ENCODE measurements at regions of chr4 and their contacts with region 1.

Region 1: GRCh38 chr4:23202712-23203247 is 510.0 kb downstream of the GBA3 start:
- DNase-seq: no peak
- H3K4me3 ChIP-seq: no peak overlapping the region
- H3K27ac ChIP-seq: no peak overlapping the region
- H3K4me1 ChIP-seq: no peaks in the 10 kb centered on the region
- H3K27me3 ChIP-seq: no peaks in the 10 kb centered on the region
- CTCF ChIP-seq: no peak

Region 2: GRCh38 chr4:21271439-21272052 is 1931.2 kb before region 1 on chr4:
- CTCF ChIA-PET with region 1: no interaction called
- POLR2A ChIA-PET with region 1: interaction called, 24 read pairs
- intact Hi-C with region 1: no loop called
- DNase-seq: no peak
- H3K4me3 ChIP-seq: no peak overlapping the region
- H3K27ac ChIP-seq: no peak overlapping the region
- H3K4me1 ChIP-seq: no peaks in the 10 kb centered on the region
- H3K27me3 ChIP-seq: no peaks in the 10 kb centered on the region
- CTCF ChIP-seq: no peak

Region 3: DNA sequence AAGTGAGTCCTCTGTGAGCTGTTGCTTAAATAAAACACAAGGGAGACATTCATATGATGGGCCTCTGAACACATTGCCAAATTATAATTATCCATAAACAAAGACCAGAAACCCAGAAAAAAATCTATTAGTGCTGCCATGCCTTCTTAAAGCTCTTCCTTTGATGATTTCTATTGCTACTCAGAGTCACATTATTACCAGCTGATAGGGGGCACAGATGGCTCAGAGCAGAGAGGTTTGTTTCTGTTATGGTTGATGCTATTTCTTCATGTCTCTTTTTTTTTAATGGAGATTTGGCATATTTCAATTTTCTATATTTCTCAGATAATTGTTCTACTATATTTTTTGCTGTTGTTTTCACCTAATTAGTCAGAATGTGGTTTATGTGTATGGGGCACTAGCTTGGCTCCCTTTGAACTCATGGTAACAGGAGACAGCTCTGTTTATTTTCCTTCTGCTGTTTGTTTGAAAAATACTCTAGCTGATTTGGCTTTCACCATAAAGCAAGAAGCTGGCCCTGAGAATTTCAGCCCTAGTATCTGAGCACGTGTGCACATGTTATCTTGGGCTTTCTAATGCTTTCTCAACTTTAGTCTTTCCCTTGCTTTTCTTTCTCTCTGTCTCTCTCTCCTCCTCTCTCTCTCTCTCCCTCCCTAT is 118.3 kb after region 1 on chr4:
- CTCF ChIA-PET with region 1: no interaction called
- POLR2A ChIA-PET with region 1: no interaction called
- intact Hi-C with region 1: no loop called
- DNase-seq: no peak
- H3K4me3 ChIP-seq: no peak overlapping the region
- H3K27ac ChIP-seq: no peak overlapping the region
- H3K4me1 ChIP-seq: 0 out of 2 replicates have a peak, but pooled peaks cover 4% of the 10 kb centered on the region
- H3K27me3 ChIP-seq: no peaks in the 10 kb centered on the region
- CTCF ChIP-seq: no peak

Region 4: DNA sequence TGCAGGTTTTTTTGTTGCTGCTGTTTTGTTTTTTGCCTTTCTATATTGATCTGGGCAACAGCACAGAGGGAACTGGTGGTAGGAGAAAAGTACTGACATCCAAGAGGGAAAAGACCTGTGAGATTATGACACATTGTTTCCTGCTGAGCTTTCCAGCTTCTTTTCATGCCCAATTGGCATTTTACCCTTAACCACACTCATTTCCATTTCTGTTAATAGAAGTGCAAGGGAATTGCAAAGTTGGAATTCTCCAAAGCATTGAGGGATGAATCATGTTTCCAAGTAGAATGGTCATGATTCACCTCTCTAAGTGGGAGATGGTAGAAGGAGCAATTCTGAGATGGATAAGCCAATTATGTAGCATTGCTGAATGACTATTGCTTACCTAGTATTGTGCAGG is 525.6 kb after region 1 on chr4:
- CTCF ChIA-PET with region 1: no interaction called
- POLR2A ChIA-PET with region 1: no interaction called
- intact Hi-C with region 1: no loop called
- DNase-seq: no peak
- H3K4me3 ChIP-seq: no peak overlapping the region
- H3K27ac ChIP-seq: no peak overlapping the region
- H3K4me1 ChIP-seq: no peaks in the 10 kb centered on the region
- H3K27me3 ChIP-seq: no peaks in the 10 kb centered on the region
- CTCF ChIP-seq: no peak